ENCODE measurements at regions of chrX and their contacts with region 1.

Region 1: DNA sequence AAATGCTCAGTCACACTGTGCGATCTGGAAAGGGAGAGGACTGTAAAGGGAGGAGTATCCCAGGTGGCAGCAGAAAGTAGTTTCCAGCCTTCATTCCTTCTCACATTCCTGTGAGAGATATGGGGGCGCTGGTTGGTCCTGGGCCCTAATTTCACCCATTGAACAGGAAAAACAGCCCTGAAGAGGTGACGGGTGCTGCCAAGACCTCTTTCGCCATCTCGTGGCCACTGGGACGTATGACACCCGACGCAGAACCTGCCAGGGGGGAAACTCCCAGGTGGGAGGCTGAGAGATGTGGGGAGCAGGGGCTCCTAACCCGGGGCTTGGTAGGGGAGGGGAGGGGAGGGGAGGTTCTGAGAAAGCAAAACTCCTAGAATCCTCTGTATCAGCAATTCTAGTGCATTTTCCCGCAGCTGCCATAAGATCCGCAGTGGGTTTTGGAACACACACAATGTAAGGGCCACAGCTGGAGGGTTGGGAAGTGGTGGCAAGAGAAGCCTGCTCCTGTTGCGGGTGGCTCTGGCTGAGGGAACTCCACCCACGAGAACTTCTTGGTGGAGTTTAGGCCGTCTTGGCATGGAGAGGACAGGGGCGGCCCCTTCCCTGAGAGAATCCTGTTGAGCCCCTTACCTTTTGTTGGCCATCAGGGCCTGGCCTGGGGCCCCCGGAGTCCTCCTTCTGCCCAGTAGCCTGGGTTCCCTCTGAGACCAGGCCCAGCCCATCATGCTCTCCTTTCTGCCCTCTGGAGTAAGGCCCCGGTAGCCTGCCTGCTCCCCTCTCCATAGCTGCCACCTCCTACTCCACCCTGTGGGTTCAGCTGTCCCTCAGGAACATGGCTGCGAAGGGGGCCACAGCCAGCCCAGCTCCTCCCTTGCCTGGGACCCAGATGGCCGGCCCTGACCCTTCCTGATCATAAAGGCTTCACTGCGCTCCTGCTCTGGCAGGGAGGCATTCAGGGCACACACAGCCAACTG is 134.1 kb downstream of the OR13H1 start:
- DNase-seq: peak; percentile 58
- H3K4me3 Mint-ChIP-seq: no peak overlapping the region
- H3K27ac Mint-ChIP-seq: no peak overlapping the region
- H3K4me1 Mint-ChIP-seq: no peaks in the 10 kb centered on the region
- H3K27me3 Mint-ChIP-seq: peaks cover 58% of the 10 kb centered on the region
- CTCF ChIP-seq: peak; percentile 79

Region 2: DNA sequence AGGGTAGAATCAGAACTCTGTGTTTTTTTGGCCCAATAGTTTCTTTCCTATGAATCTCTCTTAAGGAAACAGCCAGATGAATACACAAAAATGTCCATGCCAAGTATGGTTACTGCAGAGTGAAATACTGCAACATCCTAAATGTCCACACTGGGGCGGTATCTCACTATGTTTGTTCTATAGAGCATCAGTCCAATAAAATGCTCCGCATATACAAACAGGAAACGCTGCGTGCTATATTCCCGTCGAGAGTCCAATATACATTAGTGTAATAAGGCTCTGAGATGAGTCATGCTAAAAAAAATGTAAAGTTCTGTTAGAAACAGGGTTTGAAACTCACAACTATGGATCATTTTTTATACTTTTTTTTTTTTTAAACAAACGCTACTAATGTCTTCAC is 702.0 kb before region 1 on chrX:
- CTCF ChIA-PET with region 1: interaction called, 47 read pairs
- POLR2A ChIA-PET with region 1: no interaction called
- intact Hi-C with region 1: loop called (anchors 1 kb)
- DNase-seq: peak; percentile 63
- H3K4me3 Mint-ChIP-seq: no peak overlapping the region
- H3K27ac Mint-ChIP-seq: no peak overlapping the region
- H3K4me1 Mint-ChIP-seq: no peaks in the 10 kb centered on the region
- H3K27me3 Mint-ChIP-seq: peaks cover 35% of the 10 kb centered on the region
- CTCF ChIP-seq: peak; percentile 65

Region 3: GRCh38 chrX:130994671-130995070 is 683.3 kb before region 1 on chrX:
- CTCF ChIA-PET with region 1: interaction called, 13 read pairs
- POLR2A ChIA-PET with region 1: no interaction called
- intact Hi-C with region 1: no loop called
- DNase-seq: peak; percentile 48
- H3K4me3 Mint-ChIP-seq: no peak overlapping the region
- H3K27ac Mint-ChIP-seq: no peak overlapping the region
- H3K4me1 Mint-ChIP-seq: no peaks in the 10 kb centered on the region
- H3K27me3 Mint-ChIP-seq: peaks cover 87% of the 10 kb centered on the region
- CTCF ChIP-seq: peak; percentile 53

Region 4: GRCh38 chrX:131366407-131366806 is 311.5 kb before region 1 on chrX:
- CTCF ChIA-PET with region 1: no interaction called
- POLR2A ChIA-PET with region 1: no interaction called
- intact Hi-C with region 1: no loop called
- DNase-seq: peak; percentile 9
- H3K4me3 Mint-ChIP-seq: no peak overlapping the region
- H3K27ac Mint-ChIP-seq: no peak overlapping the region
- H3K4me1 Mint-ChIP-seq: no peaks in the 10 kb centered on the region
- H3K27me3 Mint-ChIP-seq: peaks cover 71% of the 10 kb centered on the region
- CTCF ChIP-seq: peak; percentile 5

Region 5: DNA sequence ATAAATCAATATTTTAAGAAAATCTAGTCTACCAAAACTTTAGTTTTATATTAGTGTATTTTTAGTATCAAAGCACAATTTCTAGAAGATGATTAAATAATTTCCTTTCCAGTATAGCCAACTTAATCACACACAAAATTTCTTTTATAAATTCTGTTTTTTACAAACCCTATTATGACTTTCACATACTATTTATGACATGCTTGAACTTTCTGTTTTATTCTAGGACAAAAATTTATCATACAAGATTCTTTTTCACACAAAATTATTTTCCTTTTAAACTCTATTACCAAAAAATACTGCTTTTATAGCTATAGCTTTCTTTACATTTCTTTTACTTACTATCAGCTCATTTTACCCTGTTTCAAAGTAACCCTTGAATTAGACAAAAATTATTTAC is 15.4 kb after region 1 on chrX:
- CTCF ChIA-PET with region 1: interaction called, 11 read pairs
- POLR2A ChIA-PET with region 1: interaction called, 3 read pairs
- intact Hi-C with region 1: no loop called
- DNase-seq: no peak
- H3K4me3 Mint-ChIP-seq: no peak overlapping the region
- H3K27ac Mint-ChIP-seq: no peak overlapping the region
- H3K4me1 Mint-ChIP-seq: no peaks in the 10 kb centered on the region
- H3K27me3 Mint-ChIP-seq: peaks cover 20% of the 10 kb centered on the region
- CTCF ChIP-seq: no peak

Measured in MCF 10A (cell line).